RWPE1 (cell line): ENCODE measurements at regions of chr11 and their contacts with region 1.

Region 1: DNA sequence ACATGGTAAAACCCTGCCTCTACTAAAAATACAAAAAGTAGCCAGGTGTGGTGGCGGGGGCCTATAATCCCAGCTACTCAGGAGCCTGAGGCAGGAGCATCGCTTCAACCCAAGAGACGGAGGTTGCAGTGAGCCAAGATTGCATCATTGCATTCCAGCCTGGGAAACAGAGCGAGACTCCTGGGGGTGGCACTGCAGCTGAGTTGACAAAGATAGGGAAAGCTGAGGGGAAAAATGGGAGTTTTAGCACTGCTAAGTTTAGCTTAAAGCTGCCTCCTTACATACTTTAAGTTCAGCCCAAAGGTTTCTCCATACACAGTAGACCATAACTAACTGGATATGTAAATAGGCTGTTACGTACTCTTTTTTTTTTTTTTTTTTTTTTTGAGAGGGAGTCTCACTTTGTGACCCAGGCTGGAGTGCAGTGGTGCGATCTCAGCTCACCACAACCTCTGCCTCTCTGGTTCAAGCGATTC is 9.0 kb upstream of the USP28 start:
- DNase-seq: no peak
- H3K27ac ChIP-seq: no peak overlapping the region
- CTCF ChIP-seq: no peak

Region 2: DNA sequence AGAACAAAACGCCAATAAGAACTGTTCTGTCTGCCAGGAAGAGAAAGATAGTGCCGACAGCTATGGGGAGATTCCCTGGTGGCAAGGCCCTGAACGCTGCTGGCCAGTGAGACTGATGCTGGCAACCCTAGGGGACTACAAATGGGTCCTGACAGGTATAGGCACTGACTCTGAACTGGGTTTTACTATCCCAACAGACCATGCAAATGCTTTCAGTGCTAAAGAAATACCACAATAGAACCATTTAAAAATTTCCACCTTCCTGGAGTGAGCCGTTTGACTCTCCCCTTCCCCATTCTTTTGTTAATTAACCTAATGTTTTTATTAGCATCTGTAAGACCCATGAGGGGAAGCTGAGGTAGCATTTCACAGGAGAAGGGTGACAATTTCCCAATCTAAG is 34.7 kb before region 1 on chr11:
- CTCF ChIA-PET with region 1: no interaction called
- POLR2A ChIA-PET with region 1: no interaction called
- DNase-seq: no peak
- H3K27ac ChIP-seq: no peak overlapping the region
- CTCF ChIP-seq: no peak

Region 3: GRCh38 chr11:113896156-113896879 is 11.9 kb after region 1 on chr11:
- CTCF ChIA-PET with region 1: interaction called, 11 read pairs
- POLR2A ChIA-PET with region 1: no interaction called
- DNase-seq: peak; percentile 31
- H3K27ac ChIP-seq: no peak overlapping the region
- CTCF ChIP-seq: peak; percentile 83